ENCODE measurements at regions of chr13 and their contacts with region 1.

Region 1: GRCh38 chr13:92175330-92175729 is 776.9 kb downstream of the GPC5 start:
- DNase-seq: peak; percentile 34
- H3K4me3 ChIP-seq: no peak overlapping the region
- H3K27ac ChIP-seq: no peak overlapping the region
- H3K27me3 ChIP-seq: no peaks in the 10 kb centered on the region
- CTCF ChIP-seq: peak; percentile 62

Region 2: DNA sequence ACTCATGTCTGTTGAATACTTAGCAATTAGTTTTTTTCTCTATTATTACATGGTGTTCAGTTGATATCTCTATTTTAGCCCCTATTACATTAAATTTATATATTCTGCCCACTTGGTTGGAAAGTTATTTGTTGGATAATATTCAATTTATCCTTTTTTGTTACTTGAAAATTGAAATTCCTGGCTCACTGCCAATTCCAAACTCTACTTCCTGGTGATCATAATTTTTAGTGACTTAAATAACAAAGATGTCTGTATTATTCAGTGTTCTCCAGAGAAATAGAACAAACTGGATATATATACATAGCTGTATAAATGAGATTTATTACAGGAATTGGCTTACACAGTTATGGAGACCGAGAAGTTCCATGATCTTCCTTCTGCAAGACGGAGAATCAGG is 683.3 kb before region 1 on chr13:
- CTCF ChIA-PET with region 1: no interaction called
- POLR2A ChIA-PET with region 1: no interaction called
- DNase-seq: no peak
- H3K4me3 ChIP-seq: no peak overlapping the region
- H3K27ac ChIP-seq: no peak overlapping the region
- H3K27me3 ChIP-seq: no peaks in the 10 kb centered on the region
- CTCF ChIP-seq: no peak

Region 3: GRCh38 chr13:92187378-92187989 is 12.2 kb after region 1 on chr13:
- CTCF ChIA-PET with region 1: interaction called, 20 read pairs
- POLR2A ChIA-PET with region 1: no interaction called
- DNase-seq: no peak
- H3K4me3 ChIP-seq: no peak overlapping the region
- H3K27ac ChIP-seq: no peak overlapping the region
- H3K27me3 ChIP-seq: no peaks in the 10 kb centered on the region
- CTCF ChIP-seq: peak; percentile 91

Region 4: GRCh38 chr13:92590503-92590908 is 415.2 kb after region 1 on chr13:
- CTCF ChIA-PET with region 1: no interaction called
- POLR2A ChIA-PET with region 1: no interaction called
- DNase-seq: no peak
- H3K4me3 ChIP-seq: no peak overlapping the region
- H3K27ac ChIP-seq: no peak overlapping the region
- H3K27me3 ChIP-seq: no peaks in the 10 kb centered on the region
- CTCF ChIP-seq: no peak

Measured in AG04450 (cell line).